Cardiac septum (tissue), 1 donor: ENCODE measurements at regions of chr1 and their contacts with region 1.

Region 1: DNA sequence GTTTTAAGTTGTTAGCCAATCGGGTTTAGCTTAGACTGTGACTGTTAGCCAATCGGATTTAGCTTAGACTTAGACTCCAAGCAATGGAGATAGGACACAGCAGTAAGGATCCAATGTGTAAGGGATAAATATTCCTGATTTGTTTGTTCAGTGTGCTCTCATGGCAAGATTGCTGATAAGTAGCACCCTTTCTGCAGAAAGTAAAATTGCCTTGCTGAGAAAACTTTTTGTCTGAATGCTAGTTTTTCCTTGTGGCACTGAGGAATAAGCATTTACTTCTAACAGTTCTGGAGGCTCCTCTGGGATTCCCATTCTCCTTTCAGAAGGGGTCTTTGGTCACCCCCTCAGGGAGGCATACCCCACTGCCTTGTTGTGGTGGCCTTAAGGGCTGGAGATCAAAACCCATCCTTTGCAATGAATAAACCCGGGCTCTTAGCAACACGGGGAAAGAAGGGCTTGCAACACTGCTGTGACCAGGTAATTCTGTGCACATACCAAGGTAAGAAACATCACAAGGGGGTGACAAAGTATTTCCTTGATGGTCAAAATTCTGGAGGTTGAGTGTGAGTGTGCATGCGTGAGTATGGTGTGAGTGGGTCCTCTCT is 45.4 kb downstream of the SERINC2 start:
- DNase-seq: no peak

Region 2: GRCh38 chr1:31548907-31549808 is 90.8 kb after region 1 on chr1:
- intact Hi-C with region 1: loop called (anchors 5 kb)
- DNase-seq: peak; percentile 92